A549 (cell line): ENCODE measurements at regions of chr17 and their contacts with region 1.

Region 1: DNA sequence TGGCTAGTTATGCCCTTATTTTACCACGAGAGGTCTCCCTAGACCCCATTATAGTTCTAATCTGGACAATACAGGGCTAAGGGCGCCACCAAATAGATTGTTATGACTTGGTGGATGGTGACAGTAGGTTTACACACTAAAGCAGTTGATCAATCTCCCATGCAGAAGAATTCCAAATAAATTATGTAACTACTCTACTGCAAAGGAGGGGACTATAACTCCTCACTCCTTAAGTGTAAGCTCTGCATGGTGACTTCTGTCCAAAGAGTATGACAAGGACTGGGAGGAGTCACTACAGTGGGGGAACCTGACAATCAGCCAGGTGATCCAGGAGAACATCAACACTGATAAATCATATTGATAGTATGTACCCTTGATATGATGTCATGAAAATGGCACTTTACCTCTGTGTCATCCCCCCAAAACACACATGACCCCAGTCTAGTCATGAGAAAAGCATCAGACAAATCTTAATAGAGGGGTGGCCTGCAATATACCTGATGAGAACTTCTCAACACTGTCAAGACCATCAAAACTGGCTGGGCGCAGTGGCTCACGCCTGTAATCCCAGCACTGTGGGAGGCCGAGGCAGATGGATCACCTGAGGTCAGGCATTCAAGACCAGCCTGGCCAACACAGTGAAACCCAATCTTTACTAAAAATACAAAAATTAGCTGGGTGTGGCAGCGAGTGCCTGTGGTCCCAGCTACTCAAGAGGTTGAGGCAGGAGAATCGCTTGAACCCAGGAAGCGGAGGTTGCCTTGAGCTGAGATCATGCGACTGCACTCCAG is 20.1 kb upstream of the YPEL2 start:
- DNase-seq: peak; percentile 63 to 71
- ATAC-seq: peak; percentile 95 to 96
- H3K4me3 ChIP-seq: no peak overlapping the region
- H3K27ac ChIP-seq: no peak overlapping the region
- H3K4me1 ChIP-seq: no peaks in the 10 kb centered on the region
- CTCF ChIP-seq: peak; percentile 99
- EP300 ChIP-seq: no peak
- POLR2A ChIP-seq: no peak
- RAD21 ChIP-seq: peak; percentile 96

Region 2: DNA sequence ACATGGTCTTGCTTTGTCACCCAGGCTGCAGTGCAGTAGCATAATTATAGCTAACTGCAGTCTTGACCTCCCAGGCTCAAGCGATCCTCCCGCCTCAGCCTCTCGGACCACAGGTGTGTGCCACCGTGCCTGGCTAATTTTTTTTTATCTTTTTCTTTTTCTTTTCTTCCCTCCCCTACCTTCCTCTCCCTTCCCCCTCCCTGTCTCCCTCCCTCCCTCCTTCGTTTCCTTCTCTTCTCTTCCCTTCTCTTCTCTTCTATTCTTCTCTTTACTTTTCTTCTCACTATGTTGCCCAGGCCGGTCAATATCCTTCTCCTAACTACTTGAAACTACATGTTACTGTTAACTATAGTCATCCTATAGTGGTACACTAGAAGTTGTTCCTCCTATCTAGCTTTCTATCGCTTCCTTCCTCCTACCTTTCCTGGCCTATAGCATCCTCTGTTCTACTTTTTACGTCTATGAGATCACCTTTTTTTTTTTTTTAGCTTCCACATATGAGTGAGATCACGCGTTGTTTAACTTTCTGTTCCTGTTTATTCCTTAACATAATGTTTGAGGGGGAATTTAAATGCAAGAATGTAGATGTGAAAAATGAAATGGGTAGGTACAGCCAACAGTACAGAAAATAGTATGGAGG is 10.5 kb before region 1 on chr17:
- CTCF ChIA-PET with region 1: interaction called, 16 read pairs
- POLR2A ChIA-PET with region 1: no interaction called
- DNase-seq: no peak
- ATAC-seq: no peak
- H3K4me3 ChIP-seq: no peak overlapping the region
- H3K27ac ChIP-seq: no peak overlapping the region
- H3K4me1 ChIP-seq: no peaks in the 10 kb centered on the region
- CTCF ChIP-seq: no peak
- EP300 ChIP-seq: no peak
- POLR2A ChIP-seq: no peak
- RAD21 ChIP-seq: no peak

Region 3: GRCh38 chr17:59337741-59338299 is 26.5 kb after region 1 on chr17:
- CTCF ChIA-PET with region 1: interaction called, 18 read pairs
- POLR2A ChIA-PET with region 1: no interaction called
- DNase-seq: no peak
- ATAC-seq: no peak
- H3K4me3 ChIP-seq: no peak overlapping the region
- H3K27ac ChIP-seq: no peak overlapping the region
- H3K4me1 ChIP-seq: peaks cover 3% of the 10 kb centered on the region; the same call in 1 of the 3 replicates
- CTCF ChIP-seq: no peak
- EP300 ChIP-seq: no peak
- POLR2A ChIP-seq: no peak
- RAD21 ChIP-seq: no peak

Region 4: DNA sequence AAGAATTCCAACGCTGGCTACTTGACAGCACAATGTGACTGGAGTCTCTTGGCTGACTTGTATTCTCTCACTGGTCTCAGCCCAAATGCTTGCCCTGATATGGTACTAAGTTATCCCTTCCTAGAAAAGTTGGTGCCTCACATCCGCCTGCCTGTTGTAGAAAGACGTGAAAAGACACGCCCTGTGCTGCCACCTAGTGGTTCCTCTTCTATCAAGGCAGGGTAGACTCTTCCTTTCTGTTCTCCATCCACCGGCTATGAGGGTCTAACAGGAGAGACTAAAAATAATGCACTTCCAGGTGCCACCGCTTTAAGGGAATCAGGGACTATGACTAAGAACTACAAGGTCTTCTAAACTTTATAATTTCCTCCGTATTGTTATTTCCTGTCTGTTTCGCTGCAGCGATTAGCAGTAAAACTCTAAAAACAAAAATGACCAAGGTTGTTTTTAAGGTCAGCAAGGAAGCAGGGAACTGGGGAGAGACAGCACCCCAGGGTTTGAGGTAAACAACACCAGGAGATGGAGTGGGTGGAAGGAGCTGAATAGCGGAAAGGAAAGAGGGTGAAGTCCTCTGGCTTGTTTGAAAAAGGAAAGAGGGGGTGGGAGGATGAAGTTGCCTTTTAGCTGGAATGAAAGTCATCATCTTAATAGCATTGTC is 129.6 kb after region 1 on chr17:
- CTCF ChIA-PET with region 1: interaction called, 385 read pairs
- POLR2A ChIA-PET with region 1: interaction called, 3 read pairs
- DNase-seq: peak; percentile 88 to 89
- ATAC-seq: peak; percentile 99 to 100
- H3K4me3 ChIP-seq: no peak overlapping the region
- H3K27ac ChIP-seq: no peak overlapping the region; a peak in 1 of 6 replicates
- H3K4me1 ChIP-seq: no peaks in the 10 kb centered on the region; the same call in 2 of the 3 replicates
- CTCF ChIP-seq: peak; percentile 96
- EP300 ChIP-seq: no peak
- POLR2A ChIP-seq: no peak
- RAD21 ChIP-seq: peak; percentile 93 to 95

Region 5: DNA sequence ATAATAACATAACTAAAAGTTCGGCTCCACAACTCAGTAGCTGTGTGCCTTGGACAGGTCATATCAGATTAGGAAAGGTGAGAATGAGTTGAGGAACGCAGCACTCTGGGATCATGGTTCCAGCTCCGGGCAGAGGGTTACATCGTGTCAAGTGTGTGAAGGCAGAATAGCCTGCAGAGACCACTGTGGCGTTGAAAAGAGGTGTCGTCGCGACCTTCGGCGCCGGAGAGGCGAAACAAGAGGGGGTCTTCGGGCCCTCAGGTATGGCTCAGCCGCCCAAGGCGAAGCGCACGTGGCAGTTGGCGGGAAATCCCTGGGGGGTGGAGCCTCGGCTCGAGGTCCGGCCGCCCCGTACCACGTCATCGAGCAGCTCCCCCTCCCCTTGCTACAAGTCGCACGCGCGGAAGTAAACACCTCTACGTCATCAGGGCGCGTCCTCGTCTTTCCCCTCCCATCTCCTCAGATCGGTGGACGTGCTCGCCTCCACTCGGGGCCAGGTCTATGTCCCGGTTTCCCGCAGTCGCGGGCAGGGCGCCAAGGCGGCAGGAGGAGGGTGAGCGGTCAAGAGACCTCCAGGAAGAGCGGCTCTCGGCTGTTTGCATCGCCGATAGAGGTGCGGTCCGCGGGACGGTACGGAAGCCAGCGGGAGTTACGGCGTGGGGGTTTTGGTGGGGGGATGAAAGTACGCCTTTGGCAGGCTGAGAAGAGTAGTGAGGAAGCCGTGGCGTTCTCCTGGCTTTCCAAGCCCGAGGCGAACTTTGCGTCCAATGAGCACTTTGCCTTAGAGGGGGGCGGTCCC is 254.0 kb after region 1 on chr17 and contains the start of gene DHX40:
- CTCF ChIA-PET with region 1: interaction called, 30 read pairs
- POLR2A ChIA-PET with region 1: no interaction called
- DNase-seq: peak; percentile 95 to 98
- ATAC-seq: peak; percentile 91 to 94
- H3K4me3 ChIP-seq: peak within 1 kb of the TSS; percentile 83
- H3K27ac ChIP-seq: peak within 1 kb of the TSS; percentile 74 to 93
- H3K4me1 ChIP-seq: peaks cover 7% of the 10 kb centered on the region
- CTCF ChIP-seq: no peak
- EP300 ChIP-seq: no peak
- POLR2A ChIP-seq: peak; percentile 52
- RAD21 ChIP-seq: no peak
- polyA plus RNA-seq, gene DHX40: 87.4 and 109 TPM in 2 replicates